ENCODE measurements at regions of chr12 and their contacts with region 1.

Region 1: GRCh38 chr12:131949431-131950181 is at the start of gene EP400:
- DNase-seq: peak; percentile 96 to 97
- ATAC-seq: peak; percentile 98 to 99 (median 99)
- H3K4me3 ChIP-seq: peak within 1 kb of the TSS; percentile 76 to 100 (median 92)
- H3K27ac ChIP-seq: peak within 1 kb of the TSS; percentile 58 to 92 (median 80)
- H3K4me1 ChIP-seq: peaks cover 4 to 50% (median 29%) of the 10 kb centered on the region in 9 donors
- H3K27me3 ChIP-seq: no peaks in the 10 kb centered on the region
- CTCF ChIP-seq: peak; percentile 17 to 77 (median 60)
- total RNA-seq, gene EP400: 14.1 to 20.5 (median 19.3) TPM

Region 2: GRCh38 chr12:131710464-131711457 is 238.8 kb before region 1 on chr12 and contains the start of gene SFSWAP:
- intact Hi-C with region 1: loop called in 1 of 10 experiments (anchors 10 kb)
- DNase-seq: peak; percentile 74 to 76
- ATAC-seq: peak; percentile 96 to 98 (median 97)
- H3K4me3 ChIP-seq: peak within 1 kb of the TSS; percentile 57 to 100 (median 91)
- H3K27ac ChIP-seq: peak within 1 kb of the TSS; percentile 87 to 100 (median 96)
- H3K4me1 ChIP-seq: peaks cover 2 to 30% (median 23%) of the 10 kb centered on the region in 9 donors
- H3K27me3 ChIP-seq: no peaks in the 10 kb centered on the region
- CTCF ChIP-seq: no peak
- total RNA-seq, gene SFSWAP: 14.8 to 26.8 (median 19.6) TPM

Region 3: DNA sequence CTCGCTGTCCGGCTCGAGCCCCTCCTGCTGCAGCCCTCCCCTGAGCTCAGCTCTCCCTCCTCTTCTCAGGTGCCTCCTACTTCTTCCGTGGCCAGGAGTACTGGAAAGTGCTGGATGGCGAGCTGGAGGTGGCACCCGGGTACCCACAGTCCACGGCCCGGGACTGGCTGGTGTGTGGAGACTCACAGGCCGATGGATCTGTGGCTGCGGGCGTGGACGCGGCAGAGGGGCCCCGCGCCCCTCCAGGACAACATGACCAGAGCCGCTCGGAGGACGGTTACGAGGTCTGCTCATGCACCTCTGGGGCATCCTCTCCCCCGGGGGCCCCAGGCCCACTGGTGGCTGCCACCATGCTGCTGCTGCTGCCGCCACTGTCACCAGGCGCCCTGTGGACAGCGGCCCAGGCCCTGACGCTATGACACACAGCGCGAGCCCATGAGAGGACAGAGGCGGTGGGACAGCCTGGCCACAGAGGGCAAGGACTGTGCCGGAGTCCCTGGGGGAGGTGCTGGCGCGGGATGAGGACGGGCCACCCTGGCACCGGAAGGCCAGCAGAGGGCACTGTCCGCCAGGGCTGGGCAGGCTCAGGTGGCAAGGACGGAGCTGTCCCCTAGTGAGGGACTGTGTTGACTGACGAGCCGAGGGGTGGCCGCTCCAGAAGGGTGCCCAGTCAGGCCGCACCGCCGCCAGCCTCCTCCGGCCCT is 98.6 kb before region 1 on chr12:
- intact Hi-C with region 1: loop called in 3 of 10 experiments (anchors 5 to 10 kb)
- DNase-seq: peak in 1 of 2 donors; percentile 9
- ATAC-seq: peak in 6 of 8 donors; percentile 12 to 91 (median 76)
- H3K4me3 ChIP-seq: no peak overlapping the region
- H3K27ac ChIP-seq: no peak overlapping the region
- H3K4me1 ChIP-seq: peaks cover 0 to 10% (median 0%) of the 10 kb centered on the region in 9 donors
- H3K27me3 ChIP-seq: peaks cover 0 to 27% (median 21%) of the 10 kb centered on the region in 7 donors
- CTCF ChIP-seq: peak in 4 of 9 donors; percentile 61 to 85 (median 71)

Region 4: DNA sequence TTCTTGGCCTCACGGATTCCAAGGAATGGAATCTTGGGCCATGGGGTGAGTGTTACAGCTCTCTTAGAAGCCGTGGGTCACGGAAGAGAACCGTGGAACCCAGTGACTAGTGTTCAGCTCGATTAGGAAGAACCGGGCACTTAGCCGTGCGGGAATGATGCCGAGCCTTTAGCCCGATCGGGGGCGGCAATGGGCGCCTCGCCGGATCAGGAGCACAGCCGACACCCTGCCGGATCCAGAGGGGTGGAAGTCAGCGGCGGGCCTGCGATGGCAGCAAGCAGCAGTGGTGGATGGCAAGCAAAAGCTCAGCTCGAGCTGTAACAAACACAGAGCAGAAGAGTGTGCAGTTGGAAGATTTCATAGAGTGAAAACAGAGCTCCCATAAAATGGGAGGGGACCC is 76.3 kb before region 1 on chr12:
- intact Hi-C with region 1: no loop called
- DNase-seq: no peak
- ATAC-seq: no peak
- H3K4me3 ChIP-seq: no peak overlapping the region
- H3K27ac ChIP-seq: no peak overlapping the region
- H3K4me1 ChIP-seq: peaks cover 0 to 18% (median 0%) of the 10 kb centered on the region in 9 donors
- H3K27me3 ChIP-seq: no peaks in the 10 kb centered on the region
- CTCF ChIP-seq: no peak

Region 5: GRCh38 chr12:131894313-131894860 is 55.2 kb before region 1 on chr12 and contains the start of gene ULK1:
- intact Hi-C with region 1: loop called in 2 of 10 experiments (anchors 1 to 5 kb)
- DNase-seq: peak; percentile 92 to 96
- ATAC-seq: peak; percentile 68 to 80 (median 76)
- H3K4me3 ChIP-seq: peak within 1 kb of the TSS; percentile 40 to 85 (median 64)
- H3K27ac ChIP-seq: peak within 1 kb of the TSS; percentile 94 to 99 (median 98)
- H3K4me1 ChIP-seq: peaks cover 8 to 35% (median 24%) of the 10 kb centered on the region in 9 donors
- H3K27me3 ChIP-seq: no peaks in the 10 kb centered on the region
- CTCF ChIP-seq: no peak
- total RNA-seq, gene ULK1: 30.2 to 77.7 (median 51.6) TPM

Region 6: GRCh38 chr12:131928711-131929580 is 20.7 kb before region 1 on chr12 and contains the start of gene PUS1:
- intact Hi-C with region 1: loop called in 2 of 10 experiments (anchors 1 to 2 kb)
- DNase-seq: peak; percentile 95 to 97
- ATAC-seq: peak; percentile 90 to 96 (median 95)
- H3K4me3 ChIP-seq: peak within 1 kb of the TSS; percentile 52 to 98 (median 80)
- H3K27ac ChIP-seq: peak within 1 kb of the TSS; percentile 88 to 96 (median 92)
- H3K4me1 ChIP-seq: peaks cover 5 to 34% (median 21%) of the 10 kb centered on the region in 9 donors
- H3K27me3 ChIP-seq: no peaks in the 10 kb centered on the region
- CTCF ChIP-seq: peak in 2 of 9 donors; percentile 14 to 24
- total RNA-seq, gene PUS1: 5.1 to 14.8 (median 7.5) TPM

Measured in heart right ventricle (tissue), 16 donors.